Heart right ventricle (tissue), 16 donors: ENCODE measurements at regions of chr19 and their contacts with region 1.

Region 1: GRCh38 chr19:17390665-17391370 is 3.2 kb downstream of the CCDC194 start:
- DNase-seq: peak; percentile 93 to 94
- ATAC-seq: peak; percentile 96 to 99 (median 98)
- H3K4me3 ChIP-seq: peak overlapping the region; percentile 21 to 58 (median 52)
- H3K27ac ChIP-seq: peak overlapping the region in 6 of 10 donors; percentile 5 to 35 (median 29)
- H3K4me1 ChIP-seq: peaks cover 0 to 40% (median 23%) of the 10 kb centered on the region in 9 donors
- H3K27me3 ChIP-seq: peaks cover 0 to 50% (median 15%) of the 10 kb centered on the region in 7 donors
- CTCF ChIP-seq: peak; percentile 50 to 87 (median 80)

Region 2: DNA sequence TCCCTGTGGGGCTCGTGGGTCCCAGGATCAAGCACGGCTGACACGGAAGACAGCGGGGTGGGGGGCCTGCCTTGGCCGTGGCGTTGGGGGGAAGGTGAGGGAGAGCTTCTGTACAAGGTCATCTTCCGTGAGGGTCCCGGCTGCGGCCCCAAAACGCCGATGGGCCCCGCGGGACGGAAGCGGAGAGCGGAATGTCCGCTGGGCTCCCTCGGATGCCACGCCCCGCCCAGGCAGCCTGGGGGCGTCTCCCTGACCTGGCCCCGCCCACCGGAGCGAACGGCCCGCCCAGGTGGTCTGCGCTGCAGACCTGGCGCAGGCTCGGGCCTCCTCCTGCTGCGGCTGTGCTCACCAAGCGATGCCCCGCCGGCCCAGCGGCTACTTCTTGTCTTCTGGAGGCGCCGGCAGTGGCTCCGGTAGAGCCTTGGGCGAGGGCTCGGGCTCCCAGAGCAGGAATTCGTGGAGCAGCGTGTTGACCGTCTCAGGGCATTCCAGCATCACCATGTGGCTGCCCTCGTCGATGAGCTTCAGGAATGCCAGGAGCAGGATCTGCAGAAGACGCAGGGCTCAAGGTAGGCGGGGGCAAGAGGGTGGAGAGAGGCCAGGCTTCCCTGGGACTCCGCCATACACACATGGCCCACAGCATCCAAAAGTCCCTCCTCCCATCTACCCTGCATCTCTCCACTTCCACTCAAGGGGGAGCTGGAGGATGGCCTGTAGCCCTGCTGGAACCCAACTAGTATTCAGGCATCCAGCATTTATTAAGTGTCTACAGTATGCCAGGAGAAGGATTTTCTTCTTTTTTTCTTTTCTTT is 98.3 kb before region 1 on chr19:
- intact Hi-C with region 1: loop called in 8 of 10 experiments (anchors 2 to 10 kb)
- DNase-seq: peak; percentile 72 to 73
- ATAC-seq: peak; percentile 83 to 94 (median 90)
- H3K4me3 ChIP-seq: peak overlapping the region; percentile 16 to 70 (median 60)
- H3K27ac ChIP-seq: peak overlapping the region in 8 of 10 donors; percentile 10 to 58 (median 43)
- H3K4me1 ChIP-seq: peaks cover 0 to 18% (median 0%) of the 10 kb centered on the region in 9 donors
- H3K27me3 ChIP-seq: peaks cover 0 to 4% (median 0%) of the 10 kb centered on the region in 7 donors
- CTCF ChIP-seq: peak; percentile 32 to 76 (median 67)

Region 3: GRCh38 chr19:17346109-17346671 is 44.6 kb before region 1 on chr19:
- intact Hi-C with region 1: loop called (anchors 1 to 2 kb)
- DNase-seq: peak; percentile 78 to 81
- ATAC-seq: peak; percentile 70 to 85 (median 78)
- H3K4me3 ChIP-seq: no peak overlapping the region
- H3K27ac ChIP-seq: peak overlapping the region in 8 of 10 donors; percentile 56 to 86 (median 77)
- H3K4me1 ChIP-seq: peaks cover 16 to 52% (median 36%) of the 10 kb centered on the region in 9 donors
- H3K27me3 ChIP-seq: peaks cover 0 to 19% (median 0%) of the 10 kb centered on the region in 7 donors
- CTCF ChIP-seq: peak; percentile 92 to 98 (median 97)

Region 4: DNA sequence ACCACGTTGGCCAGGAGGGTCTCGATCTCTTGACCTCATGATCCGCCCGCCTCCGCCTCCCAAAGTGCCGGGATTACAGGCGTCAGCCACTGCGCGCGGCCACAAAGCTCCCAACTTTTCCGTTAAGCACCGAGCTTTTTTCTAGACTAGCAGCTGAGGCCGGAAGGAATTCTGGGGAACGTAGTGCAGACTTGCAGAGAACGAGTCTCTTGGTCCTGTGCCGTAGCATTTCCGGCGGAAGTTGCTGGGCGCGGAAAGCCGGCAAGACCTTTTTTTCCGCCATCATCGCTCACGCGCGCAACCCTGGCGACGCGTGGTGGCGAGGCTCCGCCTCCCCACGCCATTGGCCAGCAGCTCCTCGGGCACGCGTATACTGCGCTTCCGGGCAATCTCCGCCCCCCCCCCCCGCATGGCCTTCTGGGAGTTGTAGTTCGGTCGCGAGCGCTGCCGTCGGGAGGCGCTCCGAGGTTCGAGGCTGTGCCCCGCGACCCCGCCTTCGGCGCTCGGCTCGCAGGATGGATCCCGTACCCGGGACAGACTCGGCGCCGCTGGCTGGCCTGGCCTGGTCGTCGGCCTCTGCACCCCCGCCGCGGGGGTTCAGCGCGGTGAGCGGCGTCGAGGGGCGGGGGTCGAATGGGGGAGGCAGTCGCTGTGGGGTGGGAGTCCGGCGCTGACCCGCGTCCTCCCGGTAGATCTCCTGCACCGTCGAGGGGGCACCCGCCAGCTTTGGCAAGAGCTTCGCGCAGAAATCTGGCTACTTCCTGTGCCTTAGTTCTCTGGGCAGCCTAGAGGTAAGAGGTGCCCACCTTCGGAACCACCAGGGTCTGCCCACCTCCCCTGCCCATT is 29.0 kb after region 1 on chr19 and contains the start of gene MVB12A:
- intact Hi-C with region 1: loop called in 1 of 10 experiments (anchors 1 kb)
- DNase-seq: peak; percentile 97 to 98
- ATAC-seq: peak; percentile 97 to 99 (median 98)
- H3K4me3 ChIP-seq: peak within 1 kb of the TSS; percentile 52 to 99 (median 85)
- H3K27ac ChIP-seq: peak within 1 kb of the TSS in 9 of 10 donors; percentile 64 to 93 (median 81)
- H3K4me1 ChIP-seq: peaks cover 0 to 19% (median 15%) of the 10 kb centered on the region in 9 donors
- H3K27me3 ChIP-seq: no peaks in the 10 kb centered on the region
- CTCF ChIP-seq: no peak
- total RNA-seq, gene MVB12A: 11.7 to 26.8 (median 13.4) TPM

Region 5: GRCh38 chr19:17470068-17470841 is 79.4 kb after region 1 on chr19 and contains the start of gene SLC27A1:
- intact Hi-C with region 1: loop called in 7 of 10 experiments (anchors 5 to 10 kb)
- DNase-seq: peak; percentile 97 to 99
- ATAC-seq: peak; percentile 88 to 93 (median 90)
- H3K4me3 ChIP-seq: peak within 1 kb of the TSS; percentile 60 to 99 (median 82)
- H3K27ac ChIP-seq: peak within 1 kb of the TSS; percentile 82 to 97 (median 96)
- H3K4me1 ChIP-seq: peaks cover 9 to 53% (median 30%) of the 10 kb centered on the region in 9 donors
- H3K27me3 ChIP-seq: no peaks in the 10 kb centered on the region
- CTCF ChIP-seq: peak in 1 of 9 donors; percentile 14
- total RNA-seq, gene SLC27A1: 37.1 to 64.5 (median 47.2) TPM